IMR-90 (cell line): ENCODE measurements at regions of chr11 and their contacts with region 1.

Region 1: GRCh38 chr11:26753723-26754504 is 32.1 kb upstream of the SLC5A12 start:
- DNase-seq: peak; percentile 74
- ATAC-seq: peak; percentile 86
- H3K4me3 ChIP-seq: no peak overlapping the region
- H3K27ac ChIP-seq: no peak overlapping the region
- H3K4me1 ChIP-seq: no peaks in the 10 kb centered on the region
- H3K27me3 ChIP-seq: no peaks in the 10 kb centered on the region
- CTCF ChIP-seq: peak; percentile 85
- POLR2A ChIP-seq: 0 out of 2 replicates have a peak, but pooled peaks have one; percentile 34
- RAD21 ChIP-seq: peak; percentile 90

Region 2: GRCh38 chr11:26365284-26365683 is 388.6 kb before region 1 on chr11:
- CTCF ChIA-PET with region 1: no interaction called
- POLR2A ChIA-PET with region 1: no interaction called
- dilution Hi-C with region 1: no loop called
- in situ Hi-C with region 1: no loop called
- intact Hi-C with region 1: no loop called
- DNase-seq: no peak
- ATAC-seq: no peak
- H3K4me3 ChIP-seq: no peak overlapping the region
- H3K27ac ChIP-seq: no peak overlapping the region
- H3K4me1 ChIP-seq: no peaks in the 10 kb centered on the region
- H3K27me3 ChIP-seq: no peaks in the 10 kb centered on the region
- CTCF ChIP-seq: no peak
- POLR2A ChIP-seq: no peak
- RAD21 ChIP-seq: no peak

Region 3: GRCh38 chr11:26947379-26947844 is 193.5 kb after region 1 on chr11:
- CTCF ChIA-PET with region 1: interaction called, 4 read pairs
- POLR2A ChIA-PET with region 1: no interaction called
- dilution Hi-C with region 1: no loop called
- in situ Hi-C with region 1: no loop called
- intact Hi-C with region 1: loop called (anchors 1 kb)
- DNase-seq: peak; percentile 100
- ATAC-seq: peak; percentile 91
- H3K4me3 ChIP-seq: no peak overlapping the region
- H3K27ac ChIP-seq: no peak overlapping the region
- H3K4me1 ChIP-seq: peaks cover 21% of the 10 kb centered on the region
- H3K27me3 ChIP-seq: no peaks in the 10 kb centered on the region
- CTCF ChIP-seq: no peak
- POLR2A ChIP-seq: no peak
- RAD21 ChIP-seq: peak; percentile 13

Region 4: GRCh38 chr11:27012234-27012921 is 258.5 kb after region 1 on chr11:
- CTCF ChIA-PET with region 1: no interaction called
- POLR2A ChIA-PET with region 1: no interaction called
- dilution Hi-C with region 1: no loop called
- in situ Hi-C with region 1: no loop called
- intact Hi-C with region 1: loop called (anchors 1 kb)
- DNase-seq: peak; percentile 88
- ATAC-seq: peak; percentile 93
- H3K4me3 ChIP-seq: no peak overlapping the region; the same call in 1 of the 2 replicates
- H3K27ac ChIP-seq: peak overlapping the region; percentile 78; the same call in 1 of the 2 replicates
- H3K4me1 ChIP-seq: peaks cover 5% of the 10 kb centered on the region
- H3K27me3 ChIP-seq: no peaks in the 10 kb centered on the region
- CTCF ChIP-seq: no peak
- POLR2A ChIP-seq: no peak
- RAD21 ChIP-seq: no peak

Region 5: DNA sequence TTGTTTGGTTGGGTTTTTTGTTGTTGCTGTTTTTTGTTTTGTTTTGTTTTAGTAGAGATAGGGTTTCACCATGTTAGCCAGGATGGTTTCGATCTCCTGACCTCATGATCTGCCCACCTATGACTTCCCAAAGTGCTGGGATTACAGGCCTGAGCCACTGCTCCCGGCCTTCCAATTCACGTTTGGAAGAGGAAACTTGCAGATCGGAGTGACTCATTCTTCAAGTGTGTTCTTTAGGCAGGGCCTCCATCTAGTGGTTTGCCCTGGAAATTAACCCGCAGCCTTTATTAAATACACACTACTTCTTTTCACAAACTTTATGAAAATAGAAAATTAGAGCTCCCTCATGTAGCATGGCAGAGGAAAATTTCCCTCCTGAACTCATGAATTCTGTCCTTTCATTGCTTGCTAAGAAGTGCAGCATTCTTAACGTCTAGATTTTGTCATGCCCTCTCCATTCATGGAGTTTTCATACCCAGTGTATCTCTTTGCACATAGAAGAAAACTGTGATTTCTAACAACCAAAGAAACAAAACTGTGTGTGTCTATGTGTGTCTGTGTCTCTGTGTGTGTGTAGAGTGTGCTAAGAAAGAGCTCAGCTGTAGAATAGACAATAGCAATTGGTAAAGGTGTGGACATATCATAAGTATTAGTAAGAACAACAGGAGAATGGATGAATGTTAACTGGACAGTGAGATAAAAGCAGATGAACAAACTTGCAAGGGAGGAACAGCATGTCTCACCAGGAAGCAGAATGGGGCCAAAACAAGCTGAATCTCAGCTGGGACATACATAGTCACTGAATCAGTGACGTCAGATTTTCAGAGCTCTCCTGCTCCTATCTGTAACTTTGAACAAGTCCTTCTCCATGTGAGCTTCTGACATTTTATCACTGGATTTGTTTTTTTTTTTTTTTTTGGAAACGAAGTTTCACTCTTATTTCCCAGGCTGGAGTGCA is 405.1 kb after region 1 on chr11:
- CTCF ChIA-PET with region 1: interaction called, 4 read pairs
- POLR2A ChIA-PET with region 1: no interaction called
- dilution Hi-C with region 1: no loop called
- in situ Hi-C with region 1: loop called (anchors 5 kb)
- intact Hi-C with region 1: loop called (anchors 1 kb)
- DNase-seq: peak; percentile 81
- ATAC-seq: peak; percentile 93
- H3K4me3 ChIP-seq: no peak overlapping the region
- H3K27ac ChIP-seq: no peak overlapping the region
- H3K4me1 ChIP-seq: no peaks in the 10 kb centered on the region
- H3K27me3 ChIP-seq: no peaks in the 10 kb centered on the region
- CTCF ChIP-seq: peak; percentile 94
- POLR2A ChIP-seq: no peak
- RAD21 ChIP-seq: peak; percentile 96

Region 6: GRCh38 chr11:28209906-28210305 is 1456.0 kb after region 1 on chr11:
- CTCF ChIA-PET with region 1: no interaction called
- POLR2A ChIA-PET with region 1: no interaction called
- dilution Hi-C with region 1: no loop called
- in situ Hi-C with region 1: no loop called
- intact Hi-C with region 1: no loop called
- DNase-seq: no peak
- ATAC-seq: no peak
- H3K4me3 ChIP-seq: no peak overlapping the region
- H3K27ac ChIP-seq: no peak overlapping the region
- H3K4me1 ChIP-seq: no peaks in the 10 kb centered on the region
- H3K27me3 ChIP-seq: no peaks in the 10 kb centered on the region
- CTCF ChIP-seq: no peak
- POLR2A ChIP-seq: no peak
- RAD21 ChIP-seq: no peak